Sciatic nerve (tissue), 2 donors: ENCODE measurements at regions of chr9 and their contacts with region 1.

Region 1: DNA sequence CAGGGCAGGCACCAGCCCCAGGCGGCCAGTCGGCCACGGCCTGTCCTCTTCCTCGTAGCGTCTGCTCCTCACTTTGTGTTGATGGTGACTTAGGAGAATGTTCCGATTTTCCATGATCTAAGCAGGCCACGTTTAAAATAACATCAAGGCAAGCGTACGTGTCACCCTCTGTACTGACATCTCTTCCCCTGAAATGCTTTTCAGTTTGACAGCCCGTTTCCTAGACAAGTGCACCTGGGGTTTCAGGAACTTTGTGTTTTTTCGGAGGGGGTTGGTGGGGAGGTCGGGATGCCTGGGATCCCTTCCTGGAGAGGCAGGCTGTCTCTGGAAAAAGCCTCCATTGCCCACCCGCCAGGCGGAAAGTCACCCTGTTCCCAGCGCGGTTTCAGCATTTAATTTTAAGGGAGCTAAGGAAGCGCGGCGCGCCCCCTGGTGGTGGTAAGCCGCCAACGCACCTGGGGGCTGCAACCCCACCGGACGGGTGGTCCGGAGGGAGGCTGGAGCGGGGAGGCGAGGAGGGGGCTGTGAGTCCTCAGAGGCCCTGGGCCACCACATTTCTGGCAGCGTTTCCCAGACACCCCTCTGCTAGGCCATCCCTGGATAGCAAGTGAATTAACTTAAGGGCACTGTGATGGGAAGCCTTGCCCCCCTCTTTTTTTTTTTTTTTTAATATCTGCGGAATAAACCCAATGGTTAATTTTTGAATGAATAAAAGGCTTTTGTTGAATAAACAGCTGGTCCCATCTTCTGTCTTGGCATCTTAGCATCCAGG is 29.5 kb upstream of the HMCN2 start:
- DNase-seq: peak; percentile 81
- ATAC-seq: peak; percentile 69

Region 2: GRCh38 chr9:129900263-129901027 is 335.6 kb before region 1 on chr9:
- intact Hi-C with region 1: no loop called
- DNase-seq: peak; percentile 50
- ATAC-seq: peak; percentile 55

Region 3: DNA sequence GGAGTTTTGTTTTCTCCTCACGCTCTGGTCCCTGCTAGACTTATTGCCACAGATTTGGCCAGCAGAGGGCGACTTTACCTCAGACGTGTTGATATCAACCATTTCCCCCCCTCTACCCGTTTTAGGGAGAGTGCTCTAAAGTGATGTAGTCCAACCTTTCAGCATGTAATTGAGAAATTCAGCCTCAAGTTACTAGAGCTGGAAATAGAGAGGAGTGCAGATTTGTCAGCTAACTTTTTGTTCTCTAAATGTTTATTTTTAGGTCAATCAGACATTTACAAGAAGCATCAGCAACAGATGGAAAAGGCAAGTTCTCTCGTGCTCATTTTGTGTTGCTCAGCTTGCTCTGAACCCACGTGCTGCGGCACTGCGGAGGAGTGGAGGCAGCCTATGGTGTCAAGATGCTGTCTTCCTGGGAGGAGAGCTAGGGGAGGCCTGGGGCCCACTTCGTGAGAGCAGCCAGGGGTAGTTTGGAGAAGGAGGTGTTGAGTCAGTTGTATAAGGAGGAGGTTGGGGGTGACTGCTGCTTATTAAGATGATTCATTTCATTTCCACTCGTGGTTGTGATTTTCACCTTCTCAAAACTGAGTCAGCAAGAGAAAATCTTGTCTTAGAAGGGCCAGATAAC is 128.7 kb before region 1 on chr9:
- intact Hi-C with region 1: loop called (anchors 2 kb)
- DNase-seq: peak; percentile 95
- ATAC-seq: peak; percentile 91

Region 4: DNA sequence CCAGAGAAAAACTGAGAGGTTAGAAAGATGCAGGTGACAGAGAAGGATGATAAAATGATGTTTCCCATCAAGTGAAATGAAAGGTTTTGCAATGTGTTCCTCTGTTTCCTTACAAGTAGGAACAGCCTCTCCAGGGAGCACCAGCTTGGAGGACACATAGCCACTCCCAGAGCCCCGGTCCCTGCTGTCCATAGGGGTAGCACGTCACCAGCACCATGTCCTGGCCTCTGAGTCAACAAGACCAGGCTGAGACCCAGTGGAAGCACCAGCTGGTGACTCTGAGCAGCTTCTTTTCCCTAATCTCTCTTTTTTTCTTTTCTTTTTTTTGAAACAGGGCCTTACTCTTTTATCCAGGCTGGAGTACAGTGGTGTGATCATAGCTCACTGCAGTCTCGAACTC is 10.0 kb after region 1 on chr9:
- intact Hi-C with region 1: no loop called
- DNase-seq: no peak
- ATAC-seq: no peak

Region 5: GRCh38 chr9:130327070-130327780 is 91.1 kb after region 1 on chr9:
- intact Hi-C with region 1: no loop called
- DNase-seq: no peak
- ATAC-seq: no peak